ENCODE measurements at regions of chr2 and their contacts with region 1.

Region 1: DNA sequence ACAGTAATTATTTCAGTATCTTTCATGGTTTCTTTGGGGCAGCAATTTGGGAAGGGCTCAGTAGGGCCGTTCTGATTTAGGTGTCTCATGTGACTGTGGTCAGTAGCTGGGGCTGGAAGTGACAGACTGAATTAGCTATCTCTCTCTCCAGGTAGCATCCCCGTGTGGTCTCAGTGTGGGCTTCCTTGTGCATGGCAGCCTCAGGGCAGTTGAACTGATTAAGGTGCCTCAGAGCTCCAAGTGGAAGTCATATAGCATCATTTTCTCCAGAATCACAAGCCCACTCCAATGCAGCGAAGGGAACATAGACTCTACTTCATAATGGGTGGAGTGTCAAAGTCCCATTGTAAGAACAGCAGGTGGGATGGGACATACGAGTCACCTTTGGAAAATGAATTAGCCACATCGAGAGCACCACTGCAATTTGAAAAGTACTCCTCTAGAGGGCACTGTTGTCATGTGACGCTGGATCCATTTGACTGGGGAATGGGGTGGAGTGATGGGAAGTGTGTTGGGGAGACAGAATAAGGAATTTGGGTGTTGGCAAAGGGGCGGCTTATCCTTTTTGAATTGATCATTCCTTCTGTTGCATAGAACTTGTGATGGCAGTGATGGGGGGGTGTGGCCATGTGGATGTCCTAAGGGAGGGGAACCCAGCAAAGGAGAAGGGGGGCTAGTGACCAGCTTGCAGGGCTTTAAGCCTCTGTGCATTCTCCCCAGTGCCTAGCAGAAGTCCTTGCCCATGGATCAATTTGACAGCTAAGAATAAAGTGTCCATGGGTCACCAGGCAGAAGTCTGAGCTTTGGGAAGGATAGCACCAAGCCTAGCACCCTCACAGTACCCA is 39.3 kb upstream of the FAM136A start:
- DNase-seq: peak; percentile 69
- H3K4me3 ChIP-seq: no peak overlapping the region
- H3K27ac ChIP-seq: no peak overlapping the region
- H3K4me1 ChIP-seq: no peaks in the 10 kb centered on the region
- H3K27me3 ChIP-seq: peaks cover 15% of the 10 kb centered on the region
- CTCF ChIP-seq: peak; percentile 91

Region 2: DNA sequence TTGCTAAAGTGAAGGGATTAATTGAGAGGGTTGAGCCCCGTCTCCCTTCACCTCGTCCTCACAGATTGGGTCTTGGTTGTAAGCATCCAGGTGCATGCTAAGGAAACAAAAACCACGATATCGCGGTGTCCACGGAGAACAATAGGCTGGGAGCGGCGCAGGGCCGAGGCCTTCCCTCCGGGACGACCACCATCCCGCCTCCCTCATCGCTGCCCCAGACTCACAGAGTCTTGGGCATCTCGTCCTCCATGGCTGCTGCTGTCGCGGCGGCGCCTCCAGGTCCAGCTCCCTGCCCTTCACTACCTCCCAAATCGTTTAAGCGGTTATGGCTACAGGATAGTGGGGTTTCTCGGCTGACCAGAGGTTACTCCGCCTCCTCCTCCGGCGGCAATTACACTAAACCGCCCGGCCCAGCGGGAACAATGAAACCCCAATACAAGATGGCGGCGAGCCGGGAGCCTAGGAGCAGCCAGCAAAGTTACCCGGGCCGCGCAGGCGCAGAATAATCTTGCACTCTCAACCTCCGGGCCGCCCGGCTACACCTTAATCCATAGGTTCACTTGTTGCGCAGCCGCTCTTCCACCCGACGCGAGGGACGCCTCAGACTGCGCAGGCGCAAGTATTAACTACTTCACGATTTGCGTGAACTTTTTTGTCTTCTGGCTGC is 92.8 kb before region 1 on chr2 and contains the start of gene TIA1:
- CTCF ChIA-PET with region 1: no interaction called
- POLR2A ChIA-PET with region 1: no interaction called
- intact Hi-C with region 1: no loop called
- DNase-seq: peak; percentile 99
- H3K4me3 ChIP-seq: peak within 1 kb of the TSS; percentile 80
- H3K27ac ChIP-seq: peak within 1 kb of the TSS; percentile 98
- H3K4me1 ChIP-seq: peaks cover 4% of the 10 kb centered on the region
- H3K27me3 ChIP-seq: no peaks in the 10 kb centered on the region
- CTCF ChIP-seq: no peak
- total RNA-seq, gene TIA1: 185 and 197 TPM in 2 replicates

Region 3: GRCh38 chr2:70616168-70616694 is 275.1 kb after region 1 on chr2:
- CTCF ChIA-PET with region 1: interaction called, 10 read pairs
- POLR2A ChIA-PET with region 1: no interaction called
- intact Hi-C with region 1: loop called (anchors 1 kb)
- DNase-seq: no peak
- H3K4me3 ChIP-seq: no peak overlapping the region
- H3K27ac ChIP-seq: no peak overlapping the region
- H3K4me1 ChIP-seq: no peaks in the 10 kb centered on the region
- H3K27me3 ChIP-seq: peaks cover 15% of the 10 kb centered on the region
- CTCF ChIP-seq: no peak

Region 4: DNA sequence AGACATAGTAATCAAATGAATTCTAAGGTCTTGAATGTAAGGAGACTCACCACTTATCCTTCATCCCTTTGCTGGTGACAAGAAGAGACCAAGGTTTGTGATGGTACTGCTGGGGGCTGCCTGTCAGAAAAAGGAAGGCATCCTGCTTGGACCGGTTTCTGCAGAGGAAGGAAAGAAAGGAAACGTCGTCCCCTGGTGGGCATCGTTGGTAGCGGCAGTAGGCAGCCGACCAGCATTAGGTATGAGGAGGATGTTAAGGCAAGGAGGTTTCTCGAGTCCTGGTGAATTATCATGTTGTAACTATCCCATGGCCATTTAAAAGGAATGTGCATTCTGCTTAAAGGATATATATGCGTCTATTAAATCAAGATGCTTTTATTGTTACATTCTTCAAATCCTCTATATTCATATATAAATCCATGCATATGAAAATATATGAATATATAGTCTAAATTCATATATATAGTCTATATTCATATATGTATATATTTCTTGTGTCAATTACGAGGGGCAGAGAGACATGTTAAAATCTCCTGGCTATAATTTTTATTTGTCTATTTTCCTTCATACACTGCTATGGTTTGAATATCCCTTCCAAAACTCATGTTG is 306.8 kb after region 1 on chr2:
- CTCF ChIA-PET with region 1: no interaction called
- POLR2A ChIA-PET with region 1: no interaction called
- intact Hi-C with region 1: loop called (anchors 1 kb)
- DNase-seq: peak; percentile 72
- H3K4me3 ChIP-seq: no peak overlapping the region
- H3K27ac ChIP-seq: no peak overlapping the region
- H3K4me1 ChIP-seq: no peaks in the 10 kb centered on the region
- H3K27me3 ChIP-seq: no peaks in the 10 kb centered on the region
- CTCF ChIP-seq: peak; percentile 93

Region 5: DNA sequence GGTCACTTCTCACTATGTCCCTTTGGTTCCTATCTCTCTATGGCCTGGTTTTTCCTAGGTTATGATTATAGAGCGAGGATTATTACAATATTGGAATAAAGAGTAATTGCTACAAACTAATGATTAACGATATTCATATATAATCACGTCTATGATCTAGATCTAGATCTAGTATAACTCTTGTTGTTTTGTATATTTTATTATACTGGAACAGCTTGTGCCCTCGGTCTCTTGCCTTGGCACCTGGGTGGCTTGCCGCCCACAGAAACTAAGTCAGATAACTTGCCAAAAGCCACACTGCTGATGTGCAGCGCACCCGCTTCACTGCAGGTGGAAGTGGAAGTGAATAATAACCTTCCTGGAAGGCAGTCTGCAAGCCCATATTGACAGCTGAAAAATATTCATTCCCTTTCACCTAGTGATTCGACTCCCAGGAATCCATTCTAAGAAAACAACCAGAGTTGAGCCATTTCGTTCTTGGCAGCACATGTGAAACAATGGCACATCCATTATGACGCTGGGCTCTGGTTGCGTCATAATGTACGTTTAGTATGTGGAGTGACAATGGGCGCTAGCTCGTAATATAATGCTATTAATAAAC is 636.6 kb after region 1 on chr2:
- CTCF ChIA-PET with region 1: no interaction called
- POLR2A ChIA-PET with region 1: no interaction called
- intact Hi-C with region 1: no loop called
- DNase-seq: peak; percentile 46
- H3K4me3 ChIP-seq: peak overlapping the region; percentile 50
- H3K27ac ChIP-seq: no peak overlapping the region
- H3K4me1 ChIP-seq: peaks cover 4% of the 10 kb centered on the region
- H3K27me3 ChIP-seq: no peaks in the 10 kb centered on the region
- CTCF ChIP-seq: peak; percentile 41; the same call in 1 of the 2 replicates

Measured in A673 (cell line).